ENCODE measurements at regions of chr1 and their contacts with region 1.

Region 1: GRCh38 chr1:157691285-157691920 is 9.2 kb downstream of the FCRL3 start:
- DNase-seq: peak; percentile 63

Region 2: DNA sequence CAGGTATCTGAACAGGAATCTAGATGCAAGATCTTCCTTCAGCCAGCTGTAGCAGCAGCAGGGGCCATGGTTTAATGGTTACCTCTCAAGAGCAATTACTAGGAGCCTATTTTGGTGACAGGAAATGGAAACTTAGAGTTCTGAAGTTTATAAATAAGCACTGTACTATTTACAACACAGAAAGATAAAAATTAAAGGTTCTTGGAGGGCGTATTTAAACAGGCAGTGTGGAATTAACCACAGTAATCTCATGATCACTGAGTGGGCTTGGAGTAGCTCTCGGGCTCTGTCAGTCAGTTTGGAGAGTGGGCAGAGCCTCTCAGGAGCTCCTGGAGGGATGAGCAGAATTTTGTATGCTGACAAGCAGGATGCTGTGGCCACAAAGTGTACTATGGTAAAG is 128.9 kb before region 1 on chr1:
- CTCF ChIA-PET with region 1: no interaction called
- POLR2A ChIA-PET with region 1: no interaction called
- DNase-seq: no peak

Region 3: GRCh38 chr1:157580179-157580827 is 111.1 kb before region 1 on chr1:
- CTCF ChIA-PET with region 1: interaction called, 19 read pairs
- POLR2A ChIA-PET with region 1: no interaction called
- DNase-seq: peak; percentile 64